ENCODE measurements at regions of chr5 and their contacts with region 1.

Region 1: DNA sequence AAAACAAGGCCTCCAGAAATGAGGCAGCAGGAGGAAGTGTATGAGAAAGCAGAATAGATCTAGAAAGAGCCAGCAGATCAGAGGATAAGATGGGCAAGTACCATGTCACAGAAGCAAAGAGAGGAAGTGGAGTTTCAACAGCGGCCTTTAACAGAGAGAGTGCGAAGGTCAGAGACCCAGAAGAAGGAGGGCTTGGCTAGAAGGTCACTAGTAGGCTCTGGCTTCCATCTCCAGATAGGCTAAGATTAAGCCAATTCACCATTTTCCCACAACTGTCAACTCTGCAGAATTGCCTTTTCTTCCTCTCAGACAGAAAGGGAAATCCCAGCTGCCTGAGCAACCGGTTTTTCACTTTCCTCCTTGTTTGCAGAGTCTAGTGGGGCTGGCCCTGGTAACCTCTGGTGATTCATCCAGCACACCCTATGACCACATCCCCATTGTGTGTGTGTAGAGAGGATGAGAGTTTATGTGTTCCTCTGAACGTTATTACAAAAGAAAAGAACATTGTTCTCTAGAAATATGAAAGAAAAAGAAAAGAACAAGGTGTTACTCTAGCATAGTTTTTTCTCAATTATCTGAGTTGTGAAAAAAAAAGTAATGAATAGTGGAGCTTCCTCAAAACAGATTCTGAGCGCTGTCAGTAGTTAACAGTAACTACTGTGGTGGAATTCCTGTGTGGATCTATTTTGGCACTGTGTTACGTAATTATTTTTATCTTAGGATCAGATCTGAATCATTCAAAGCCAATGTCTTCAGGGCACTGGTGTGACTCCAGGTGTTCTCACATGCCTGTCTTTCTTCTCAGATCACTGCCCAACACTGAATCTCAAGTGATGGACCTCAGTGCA is 220.4 kb downstream of the ARRDC3 start:
- DNase-seq: peak; percentile 70
- H3K4me3 Mint-ChIP-seq: peak overlapping the region; percentile 2
- H3K27ac Mint-ChIP-seq: peak overlapping the region; percentile 54
- H3K4me1 Mint-ChIP-seq: peaks cover 22% of the 10 kb centered on the region
- H3K27me3 Mint-ChIP-seq: peaks cover 14% of the 10 kb centered on the region

Region 2: GRCh38 chr5:90843443-90843842 is 319.3 kb before region 1 on chr5:
- intact Hi-C with region 1: no loop called
- DNase-seq: no peak
- H3K4me3 Mint-ChIP-seq: no peak overlapping the region
- H3K27ac Mint-ChIP-seq: no peak overlapping the region
- H3K4me1 Mint-ChIP-seq: no peaks in the 10 kb centered on the region
- H3K27me3 Mint-ChIP-seq: peaks cover 3% of the 10 kb centered on the region

Region 3: DNA sequence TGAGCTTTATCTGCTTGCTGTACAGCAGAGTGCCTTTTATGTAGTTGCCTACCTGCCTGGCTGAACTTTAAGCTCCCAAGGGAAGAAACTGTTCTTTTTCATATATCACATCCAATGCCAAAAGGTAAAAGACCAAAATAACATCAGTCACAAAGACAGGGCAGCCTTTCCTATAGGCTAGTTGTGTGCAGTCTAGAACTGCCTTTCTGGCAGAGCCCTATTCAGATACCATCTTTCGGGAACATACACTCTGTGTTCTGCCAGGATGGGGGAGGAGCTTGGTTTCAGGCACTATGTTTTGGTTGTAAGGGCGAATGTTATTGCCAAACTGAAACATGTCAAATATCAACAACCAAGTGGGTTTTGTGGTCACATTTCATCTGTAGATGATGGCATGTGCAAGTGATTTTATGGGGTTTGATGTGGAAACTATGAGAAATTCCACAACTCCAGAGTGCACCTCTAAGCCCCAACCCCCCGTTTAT is 289.7 kb before region 1 on chr5:
- intact Hi-C with region 1: loop called (anchors 5 kb)
- DNase-seq: no peak
- H3K4me3 Mint-ChIP-seq: no peak overlapping the region
- H3K27ac Mint-ChIP-seq: no peak overlapping the region
- H3K4me1 Mint-ChIP-seq: peaks cover 4% of the 10 kb centered on the region
- H3K27me3 Mint-ChIP-seq: peaks cover 10% of the 10 kb centered on the region

Region 4: DNA sequence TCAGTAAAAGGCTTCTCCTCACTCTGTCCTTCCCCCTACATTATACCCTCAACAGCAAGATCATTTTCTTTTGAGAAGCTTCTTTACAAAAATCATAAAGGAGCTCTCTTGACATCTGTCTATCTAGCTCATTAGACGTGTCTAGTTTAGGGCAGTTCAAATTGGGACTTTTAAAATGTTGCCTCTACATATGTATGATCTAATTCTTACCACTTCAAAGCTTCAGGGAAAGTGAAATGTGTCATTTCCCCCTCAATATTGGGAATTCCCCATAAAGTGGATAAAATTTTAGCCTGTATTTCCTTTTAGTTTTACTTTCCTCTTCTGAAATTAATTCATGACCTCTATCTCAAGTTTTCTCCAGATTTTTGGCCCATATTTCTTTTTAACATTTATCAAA is 103.3 kb before region 1 on chr5:
- intact Hi-C with region 1: loop called (anchors 2 kb)
- DNase-seq: no peak
- H3K4me3 Mint-ChIP-seq: no peak overlapping the region
- H3K27ac Mint-ChIP-seq: no peak overlapping the region
- H3K4me1 Mint-ChIP-seq: peaks cover 19% of the 10 kb centered on the region
- H3K27me3 Mint-ChIP-seq: peaks cover 48% of the 10 kb centered on the region

Region 5: GRCh38 chr5:91225848-91226686 is 63.3 kb after region 1 on chr5:
- intact Hi-C with region 1: loop called (anchors 5 kb)
- DNase-seq: peak; percentile 33
- H3K4me3 Mint-ChIP-seq: no peak overlapping the region
- H3K27ac Mint-ChIP-seq: no peak overlapping the region
- H3K4me1 Mint-ChIP-seq: peaks cover 6% of the 10 kb centered on the region
- H3K27me3 Mint-ChIP-seq: peaks cover 20% of the 10 kb centered on the region

Region 6: GRCh38 chr5:91280362-91281269 is 117.9 kb after region 1 on chr5:
- intact Hi-C with region 1: loop called (anchors 1 kb)
- DNase-seq: peak; percentile 84
- H3K4me3 Mint-ChIP-seq: peak overlapping the region; percentile 81
- H3K27ac Mint-ChIP-seq: peak overlapping the region; percentile 82
- H3K4me1 Mint-ChIP-seq: peaks cover 40% of the 10 kb centered on the region
- H3K27me3 Mint-ChIP-seq: peaks cover 4% of the 10 kb centered on the region

Region 7: DNA sequence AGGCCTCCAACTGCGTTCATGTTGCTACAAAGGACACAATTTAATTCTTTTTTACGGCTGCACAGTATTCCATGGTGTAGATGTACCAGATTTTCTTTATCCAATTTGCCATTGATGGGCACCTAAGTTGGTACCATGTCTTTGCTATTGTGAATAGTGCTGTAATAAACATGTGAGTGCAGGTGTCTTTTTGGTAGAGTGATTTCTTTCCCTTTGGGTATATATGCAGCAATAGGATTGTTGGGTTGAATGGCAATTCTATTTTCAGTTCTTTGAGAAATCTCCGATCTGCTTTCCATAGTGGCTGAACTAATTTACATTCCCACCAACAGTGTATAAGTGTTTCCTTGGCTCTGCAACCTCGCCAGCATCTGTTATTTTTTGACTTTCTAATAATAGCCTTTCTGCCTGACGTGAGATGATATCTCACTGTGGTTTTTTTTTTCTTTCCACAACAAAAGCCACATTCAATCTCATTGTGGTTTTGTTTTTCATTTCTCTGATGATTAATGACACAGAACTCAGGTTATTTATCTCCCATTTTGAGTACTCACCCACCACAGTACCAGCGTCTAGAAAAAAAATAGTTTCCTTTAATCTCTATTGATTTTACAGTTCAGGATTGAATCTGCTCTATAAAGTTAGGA is 198.4 kb after region 1 on chr5:
- intact Hi-C with region 1: loop called (anchors 1 kb)
- DNase-seq: no peak
- H3K4me3 Mint-ChIP-seq: no peak overlapping the region
- H3K27ac Mint-ChIP-seq: peak overlapping the region; percentile 67
- H3K4me1 Mint-ChIP-seq: peaks cover 14% of the 10 kb centered on the region
- H3K27me3 Mint-ChIP-seq: peaks cover 23% of the 10 kb centered on the region

Measured in activated T-helper 1 cell treated with anti-CD3 and anti-CD28 coated beads, Interleukin-12 subunit alpha, Interleukin-12 subunit beta, Interleukin-2, Interleukin-4 antibody, amounts not matched to agents 30 ng/mL and 10 ng/mL and 1 ng/mL, durations not matched to agents 14 hours and 24 hours and 36 hours (primary cell).